Activated CD8-positive, alpha-beta T cell treated with anti-CD3 and anti-CD28 coated beads for 36 hours (primary cell): ENCODE measurements at regions of chr11 and their contacts with region 1.

Region 1: DNA sequence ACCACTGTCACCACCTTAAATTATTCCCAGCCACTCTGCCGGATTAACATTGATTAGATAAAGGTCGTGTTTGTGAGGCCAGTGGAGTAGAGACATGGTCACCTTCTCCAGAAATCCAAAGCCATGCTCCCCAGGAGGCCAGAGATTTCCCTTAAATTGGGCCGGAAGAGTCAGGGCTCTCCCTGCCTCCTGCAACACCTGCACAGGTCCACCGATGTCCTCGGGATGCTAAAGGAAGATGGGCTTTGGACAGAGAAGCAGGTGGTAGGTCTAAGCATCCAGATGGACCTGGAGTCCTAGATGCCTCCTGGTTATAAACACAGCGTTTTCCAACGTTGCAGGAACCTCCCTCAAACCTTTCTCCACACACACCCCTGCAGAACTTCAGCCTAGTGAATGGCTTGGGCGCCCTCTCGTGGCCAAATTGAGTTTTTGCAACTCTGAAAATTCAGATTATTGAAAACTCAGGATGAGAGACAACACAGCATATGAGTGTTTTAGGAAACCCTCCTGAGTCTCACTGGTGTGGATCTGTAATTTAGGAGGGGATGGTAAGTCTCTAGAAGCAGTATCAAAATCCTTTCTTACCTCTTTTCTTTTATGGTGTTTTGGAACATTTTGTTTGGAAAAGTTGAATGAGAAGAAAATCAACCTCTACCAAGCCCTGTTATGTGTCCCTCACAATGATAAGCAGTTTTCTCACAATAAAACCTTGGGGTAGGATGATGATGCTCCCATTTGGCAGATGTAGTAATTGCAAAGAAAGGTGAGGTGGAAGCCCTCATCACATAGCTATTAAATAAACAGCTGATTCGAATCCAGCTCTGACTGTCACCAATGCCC is 109.6 kb downstream of the RRAS2 start:
- DNase-seq: peak; percentile 75
- ATAC-seq: peak; percentile 68
- H3K4me3 Mint-ChIP-seq: no peak overlapping the region
- H3K27ac Mint-ChIP-seq: no peak overlapping the region
- H3K4me1 Mint-ChIP-seq: peaks cover 19% of the 10 kb centered on the region
- H3K27me3 Mint-ChIP-seq: no peaks in the 10 kb centered on the region
- CTCF ChIP-seq: peak; percentile 97

Region 2: DNA sequence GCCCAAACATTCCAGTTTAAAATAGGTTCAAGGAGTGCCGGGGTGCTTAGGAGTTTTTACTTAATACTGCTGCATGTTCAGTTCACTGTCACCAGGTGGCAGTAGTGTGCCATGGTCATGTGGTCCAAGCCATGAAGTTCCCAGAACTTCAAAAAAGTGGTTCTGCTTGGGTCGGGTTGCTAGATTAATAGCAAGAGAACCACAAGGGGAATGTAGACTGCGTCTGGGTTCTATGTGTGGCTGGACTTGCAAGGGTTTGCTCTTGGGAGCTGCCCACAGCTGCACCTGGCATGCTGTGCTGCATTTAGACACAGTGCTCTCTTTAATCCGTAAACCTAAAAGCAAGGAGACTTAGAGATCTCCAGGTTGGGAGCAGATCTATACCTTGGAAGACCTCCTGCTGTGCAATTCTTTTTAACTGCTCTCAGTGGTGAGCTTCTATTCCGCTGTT is 293.3 kb before region 1 on chr11:
- CTCF ChIA-PET with region 1: interaction called, 62 read pairs
- POLR2A ChIA-PET with region 1: no interaction called
- intact Hi-C with region 1: loop called (anchors 2 kb)
- DNase-seq: peak; percentile 70
- ATAC-seq: peak; percentile 69
- H3K4me3 Mint-ChIP-seq: no peak overlapping the region
- H3K27ac Mint-ChIP-seq: no peak overlapping the region
- H3K4me1 Mint-ChIP-seq: no peaks in the 10 kb centered on the region
- H3K27me3 Mint-ChIP-seq: peaks cover 8% of the 10 kb centered on the region
- CTCF ChIP-seq: peak; percentile 92

Region 3: GRCh38 chr11:13962562-13963168 is 286.7 kb before region 1 on chr11 and contains the start of gene SPON1:
- CTCF ChIA-PET with region 1: interaction called, 62 read pairs
- POLR2A ChIA-PET with region 1: no interaction called
- intact Hi-C with region 1: loop called (anchors 2 kb)
- DNase-seq: peak; percentile 63
- ATAC-seq: peak; percentile 83
- H3K4me3 Mint-ChIP-seq: peak within 1 kb of the TSS; percentile 65
- H3K27ac Mint-ChIP-seq: no peak within 1 kb of the TSS
- H3K4me1 Mint-ChIP-seq: peaks cover 8% of the 10 kb centered on the region
- H3K27me3 Mint-ChIP-seq: peaks cover 41% of the 10 kb centered on the region
- CTCF ChIP-seq: no peak
- total RNA-seq, gene SPON1: 0.96 to 1.4 TPM

Region 4: DNA sequence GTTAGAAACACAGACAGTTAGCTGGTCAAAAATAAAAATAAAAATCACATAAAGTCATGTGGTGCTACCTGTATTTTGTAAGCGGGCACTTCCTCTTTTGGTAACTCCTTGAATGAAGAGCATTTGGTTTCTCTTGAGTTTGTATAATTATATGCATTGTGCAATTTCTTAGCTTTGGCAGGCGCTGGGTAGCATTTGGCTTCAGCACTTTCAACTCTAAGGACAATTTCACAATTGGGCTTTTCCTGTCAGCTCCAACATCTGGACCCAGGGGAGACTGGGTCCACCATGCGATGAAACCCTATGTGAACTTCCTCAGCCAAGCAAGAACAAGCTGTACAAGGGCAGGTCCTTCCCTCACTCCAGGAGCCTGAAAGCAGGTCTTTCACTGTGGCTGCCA is 59.5 kb before region 1 on chr11:
- CTCF ChIA-PET with region 1: no interaction called
- POLR2A ChIA-PET with region 1: no interaction called
- intact Hi-C with region 1: loop called (anchors 10 kb)
- DNase-seq: no peak
- ATAC-seq: no peak
- H3K4me3 Mint-ChIP-seq: no peak overlapping the region
- H3K27ac Mint-ChIP-seq: no peak overlapping the region
- H3K4me1 Mint-ChIP-seq: no peaks in the 10 kb centered on the region
- H3K27me3 Mint-ChIP-seq: no peaks in the 10 kb centered on the region
- CTCF ChIP-seq: no peak

Region 5: GRCh38 chr11:14358729-14359439 is 109.5 kb after region 1 on chr11 and contains the start of gene RRAS2:
- CTCF ChIA-PET with region 1: no interaction called
- POLR2A ChIA-PET with region 1: no interaction called
- intact Hi-C with region 1: no loop called
- DNase-seq: peak; percentile 86
- ATAC-seq: peak; percentile 91
- H3K4me3 Mint-ChIP-seq: peak within 1 kb of the TSS; percentile 93
- H3K27ac Mint-ChIP-seq: peak within 1 kb of the TSS; percentile 92
- H3K4me1 Mint-ChIP-seq: peaks cover 33% of the 10 kb centered on the region
- H3K27me3 Mint-ChIP-seq: no peaks in the 10 kb centered on the region
- CTCF ChIP-seq: no peak
- total RNA-seq, gene RRAS2: 87.9 to 92.0 TPM